GM12878 (cell line): ENCODE measurements at regions of chr13 and their contacts with region 1.

Region 1: GRCh38 chr13:33542283-33543088 is 256.9 kb upstream of the STARD13 start:
- DNase-seq: peak; percentile 94
- ATAC-seq: peak; percentile 90
- H3K4me3 ChIP-seq: peak overlapping the region; percentile 69
- H3K27ac ChIP-seq: peak overlapping the region; percentile 97
- H3K4me1 ChIP-seq: peaks cover 12% of the 10 kb centered on the region
- H3K27me3 ChIP-seq: no peaks in the 10 kb centered on the region
- CTCF ChIP-seq: peak; percentile 86 to 99 (median 88)
- EP300 ChIP-seq: no peak; a peak in 1 of 4 replicates
- POLR2A ChIP-seq: peak; percentile 70
- RAD21 ChIP-seq: peak; percentile 90

Region 2: DNA sequence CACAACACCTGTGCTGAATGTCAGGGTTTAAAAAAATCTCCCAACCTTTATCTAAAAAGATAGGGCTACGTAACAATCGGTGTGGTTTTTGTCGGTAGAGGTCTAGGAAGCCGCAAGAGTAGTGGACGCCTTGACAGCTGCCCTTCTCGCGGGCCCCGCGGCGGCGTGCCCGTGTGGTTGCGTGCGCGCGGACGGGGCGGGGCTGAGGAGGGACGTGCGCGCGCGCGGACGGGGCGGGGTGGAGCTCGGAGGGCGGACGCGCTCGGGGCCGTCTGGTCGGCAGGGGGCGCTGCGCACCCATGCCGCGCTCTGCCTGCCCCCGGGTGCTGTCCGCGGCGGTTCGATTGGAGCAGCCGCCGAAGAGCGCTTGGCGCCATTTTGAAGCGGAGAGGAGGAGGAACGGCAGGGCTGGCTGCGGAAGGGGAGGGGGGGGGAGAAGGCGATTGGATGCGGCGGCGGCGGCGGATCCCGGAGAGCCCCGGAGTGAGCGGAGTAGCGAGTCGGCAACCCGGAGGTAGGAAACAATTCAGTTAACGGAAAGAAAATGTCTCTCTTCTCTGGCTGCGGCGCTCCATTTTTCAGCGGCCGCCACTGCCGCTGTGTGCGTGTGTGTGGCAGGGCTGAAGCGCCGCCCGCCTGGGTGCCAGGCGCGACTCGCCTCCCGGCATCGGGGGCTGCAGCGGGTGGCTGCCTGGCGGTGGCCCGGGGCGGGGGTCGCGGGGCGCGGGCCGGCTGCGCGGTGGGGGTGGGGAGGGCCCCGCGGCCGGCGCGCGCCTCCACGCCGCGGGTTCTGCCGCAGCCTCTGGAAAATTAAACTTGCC is 956.2 kb before region 1 on chr13 and contains the start of gene PDS5B:
- CTCF ChIA-PET with region 1: interaction called, 6 read pairs
- POLR2A ChIA-PET with region 1: no interaction called
- RAD21 ChIA-PET with region 1: interaction called, 21 read pairs
- SMC1A ChIA-PET with region 1: interaction called, 5 read pairs
- in situ Hi-C with region 1: loop called (anchors 10 kb)
- intact Hi-C with region 1: loop called (anchors 1 kb)
- DNase-seq: peak; percentile 66
- ATAC-seq: peak; percentile 90
- H3K4me3 ChIP-seq: peak within 1 kb of the TSS; percentile 75
- H3K27ac ChIP-seq: peak within 1 kb of the TSS; percentile 84
- H3K4me1 ChIP-seq: peaks cover 4% of the 10 kb centered on the region; the same call in 1 of the 2 replicates
- H3K27me3 ChIP-seq: no peaks in the 10 kb centered on the region
- CTCF ChIP-seq: peak; percentile 68 to 96 (median 69); a peak in 4 of 6 replicates
- EP300 ChIP-seq: no peak
- POLR2A ChIP-seq: peak; percentile 71
- RAD21 ChIP-seq: peak; percentile 82
- polyA plus RNA-seq, gene PDS5B: 15.4 to 16.0 TPM

Region 3: DNA sequence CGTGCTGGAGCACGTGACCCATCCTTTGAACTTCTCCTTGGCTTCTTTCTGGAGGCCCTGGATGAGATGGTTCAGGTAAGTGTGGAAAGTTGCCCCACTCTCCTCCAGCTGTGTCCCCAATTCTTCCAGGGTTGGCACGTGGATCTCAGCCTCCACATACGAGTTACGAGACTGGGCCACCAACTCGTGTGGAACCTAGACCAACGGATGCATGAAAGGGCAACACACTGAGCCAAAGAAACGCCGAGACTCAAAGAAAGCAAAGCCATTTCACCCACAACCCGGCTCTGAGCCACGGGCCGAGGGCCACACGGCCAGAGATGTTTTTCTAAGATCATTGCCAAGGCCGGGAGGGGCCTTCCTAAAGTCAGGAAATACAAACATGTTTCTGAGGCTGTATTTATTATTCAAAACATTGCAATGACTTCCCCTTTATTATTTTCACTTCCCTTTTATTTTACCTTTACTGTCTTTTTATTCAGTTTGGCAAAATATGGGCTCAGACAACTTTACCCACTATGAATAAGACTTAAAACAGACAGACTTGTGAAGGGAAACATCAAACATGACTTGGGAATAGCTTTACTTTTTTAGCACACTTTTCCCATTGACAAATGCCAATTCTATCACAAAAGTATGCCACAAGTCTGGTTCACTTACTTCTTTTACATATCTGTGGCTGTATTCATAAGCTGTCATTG is 431.6 kb before region 1 on chr13:
- CTCF ChIA-PET with region 1: interaction called, 4 read pairs
- POLR2A ChIA-PET with region 1: no interaction called
- RAD21 ChIA-PET with region 1: interaction called, 6 read pairs
- SMC1A ChIA-PET with region 1: interaction called, 4 read pairs
- in situ Hi-C with region 1: no loop called
- intact Hi-C with region 1: loop called (anchors 5 kb)
- DNase-seq: no peak
- ATAC-seq: peak; percentile 63
- H3K4me3 ChIP-seq: no peak overlapping the region
- H3K27ac ChIP-seq: peak overlapping the region; percentile 91
- H3K4me1 ChIP-seq: peaks cover 54% of the 10 kb centered on the region
- H3K27me3 ChIP-seq: no peaks in the 10 kb centered on the region
- CTCF ChIP-seq: no peak
- EP300 ChIP-seq: peak; percentile 30 to 35; a peak in 2 of 4 replicates
- POLR2A ChIP-seq: 0 out of 2 replicates have a peak, but pooled peaks have one; percentile 17
- RAD21 ChIP-seq: peak; percentile 24; the same call in 1 of the 2 replicates

Region 4: GRCh38 chr13:33204130-33204927 is 338.2 kb before region 1 on chr13:
- CTCF ChIA-PET with region 1: interaction called, 6 read pairs
- POLR2A ChIA-PET with region 1: interaction called, 8 read pairs
- RAD21 ChIA-PET with region 1: interaction called, 16 read pairs
- SMC1A ChIA-PET with region 1: interaction called, 7 read pairs
- in situ Hi-C with region 1: loop called (anchors 5 kb)
- intact Hi-C with region 1: loop called (anchors 2 kb)
- DNase-seq: peak; percentile 78
- ATAC-seq: peak; percentile 40
- H3K4me3 ChIP-seq: peak overlapping the region; percentile 74
- H3K27ac ChIP-seq: peak overlapping the region; percentile 95
- H3K4me1 ChIP-seq: peaks cover 42% of the 10 kb centered on the region
- H3K27me3 ChIP-seq: no peaks in the 10 kb centered on the region
- CTCF ChIP-seq: no peak
- EP300 ChIP-seq: no peak; a peak in 3 of 4 replicates
- POLR2A ChIP-seq: no peak
- RAD21 ChIP-seq: no peak

Region 5: GRCh38 chr13:33367926-33368325 is 174.6 kb before region 1 on chr13:
- CTCF ChIA-PET with region 1: no interaction called
- POLR2A ChIA-PET with region 1: no interaction called
- RAD21 ChIA-PET with region 1: no interaction called
- SMC1A ChIA-PET with region 1: no interaction called
- in situ Hi-C with region 1: no loop called
- intact Hi-C with region 1: no loop called
- DNase-seq: peak; percentile 23
- ATAC-seq: peak; percentile 82
- H3K4me3 ChIP-seq: no peak overlapping the region
- H3K27ac ChIP-seq: no peak overlapping the region
- H3K4me1 ChIP-seq: peaks cover 9% of the 10 kb centered on the region
- H3K27me3 ChIP-seq: no peaks in the 10 kb centered on the region
- CTCF ChIP-seq: no peak
- EP300 ChIP-seq: no peak
- POLR2A ChIP-seq: no peak
- RAD21 ChIP-seq: no peak

Region 6: GRCh38 chr13:33678906-33679657 is 136.6 kb after region 1 on chr13:
- CTCF ChIA-PET with region 1: interaction called, 33 read pairs
- POLR2A ChIA-PET with region 1: interaction called, 8 read pairs
- RAD21 ChIA-PET with region 1: interaction called, 35 read pairs
- SMC1A ChIA-PET with region 1: interaction called, 26 read pairs
- in situ Hi-C with region 1: no loop called
- intact Hi-C with region 1: loop called (anchors 1 kb)
- DNase-seq: peak; percentile 98
- ATAC-seq: peak; percentile 97
- H3K4me3 ChIP-seq: peak overlapping the region; percentile 77
- H3K27ac ChIP-seq: peak overlapping the region; percentile 95
- H3K4me1 ChIP-seq: peaks cover 5% of the 10 kb centered on the region; the same call in 1 of the 2 replicates
- H3K27me3 ChIP-seq: no peaks in the 10 kb centered on the region
- CTCF ChIP-seq: no peak
- EP300 ChIP-seq: peak; percentile 75 to 82; a peak in 2 of 4 replicates
- POLR2A ChIP-seq: peak; percentile 90
- RAD21 ChIP-seq: 0 out of 2 replicates have a peak, but pooled peaks have one; percentile 0

Region 7: DNA sequence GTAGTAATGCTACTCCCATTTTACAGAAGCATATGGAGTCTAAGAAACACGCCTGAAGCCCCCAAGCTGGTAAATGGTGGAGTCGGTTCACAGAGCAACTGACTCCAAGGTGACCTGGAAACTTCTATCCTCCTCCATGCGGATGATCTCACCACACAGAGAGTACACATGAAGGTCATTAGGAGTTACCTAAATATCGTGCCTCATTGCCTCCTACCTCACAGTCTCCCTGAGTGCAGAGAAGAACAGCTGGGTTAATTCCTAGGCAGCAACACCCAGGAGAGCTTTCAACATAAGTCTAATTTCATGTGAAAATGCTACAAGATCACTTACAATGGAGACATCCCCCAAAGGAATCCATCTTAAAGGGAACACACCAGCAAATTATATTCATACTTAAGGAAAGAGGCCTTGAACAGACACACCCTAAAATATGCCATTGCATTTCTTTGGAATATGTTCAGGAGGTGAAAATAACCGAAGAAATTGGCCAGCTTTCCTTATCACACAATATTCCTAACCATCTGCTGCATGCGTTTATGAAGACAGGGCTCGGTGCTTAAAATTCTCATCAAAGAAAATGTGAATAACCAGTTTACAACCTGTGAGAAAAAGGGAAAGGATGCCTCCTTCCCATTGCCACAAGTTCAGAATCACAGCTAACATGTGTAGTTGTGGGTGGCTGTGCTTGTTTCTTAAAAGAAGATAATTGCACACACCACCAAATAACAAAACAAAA is 1195.9 kb after region 1 on chr13:
- CTCF ChIA-PET with region 1: no interaction called
- POLR2A ChIA-PET with region 1: no interaction called
- RAD21 ChIA-PET with region 1: no interaction called
- SMC1A ChIA-PET with region 1: no interaction called
- in situ Hi-C with region 1: no loop called
- intact Hi-C with region 1: no loop called
- DNase-seq: no peak
- ATAC-seq: no peak
- H3K4me3 ChIP-seq: no peak overlapping the region
- H3K27ac ChIP-seq: no peak overlapping the region
- H3K4me1 ChIP-seq: no peaks in the 10 kb centered on the region
- H3K27me3 ChIP-seq: no peaks in the 10 kb centered on the region
- CTCF ChIP-seq: no peak
- EP300 ChIP-seq: no peak
- POLR2A ChIP-seq: no peak
- RAD21 ChIP-seq: no peak

Region 8: GRCh38 chr13:35164324-35164932 is 1621.9 kb after region 1 on chr13:
- CTCF ChIA-PET with region 1: interaction called, 3 read pairs
- POLR2A ChIA-PET with region 1: no interaction called
- RAD21 ChIA-PET with region 1: interaction called, 4 read pairs
- SMC1A ChIA-PET with region 1: interaction called, 8 read pairs
- in situ Hi-C with region 1: loop called (anchors 10 kb)
- intact Hi-C with region 1: no loop called
- DNase-seq: peak; percentile 40
- ATAC-seq: peak; percentile 88
- H3K4me3 ChIP-seq: no peak overlapping the region
- H3K27ac ChIP-seq: no peak overlapping the region
- H3K4me1 ChIP-seq: peaks cover 22% of the 10 kb centered on the region
- H3K27me3 ChIP-seq: no peaks in the 10 kb centered on the region
- CTCF ChIP-seq: peak; percentile 47 to 78 (median 51); a peak in 5 of 6 replicates
- EP300 ChIP-seq: no peak
- POLR2A ChIP-seq: no peak
- RAD21 ChIP-seq: peak; percentile 87